Activated B cell treated with CpG ODN at 0.5 μM for 24 hours (primary cell): ENCODE measurements at regions of chr1 and their contacts with region 1.

Region 1: GRCh38 chr1:68378296-68379084 is 71.3 kb downstream of the RPE65 start:
- DNase-seq: no peak
- ATAC-seq: no peak
- H3K4me3 Mint-ChIP-seq: no peak overlapping the region
- H3K27ac Mint-ChIP-seq: no peak overlapping the region
- H3K4me1 Mint-ChIP-seq: peaks cover 4% of the 10 kb centered on the region
- H3K27me3 Mint-ChIP-seq: peaks cover 2% of the 10 kb centered on the region
- CTCF ChIP-seq: no peak

Region 2: DNA sequence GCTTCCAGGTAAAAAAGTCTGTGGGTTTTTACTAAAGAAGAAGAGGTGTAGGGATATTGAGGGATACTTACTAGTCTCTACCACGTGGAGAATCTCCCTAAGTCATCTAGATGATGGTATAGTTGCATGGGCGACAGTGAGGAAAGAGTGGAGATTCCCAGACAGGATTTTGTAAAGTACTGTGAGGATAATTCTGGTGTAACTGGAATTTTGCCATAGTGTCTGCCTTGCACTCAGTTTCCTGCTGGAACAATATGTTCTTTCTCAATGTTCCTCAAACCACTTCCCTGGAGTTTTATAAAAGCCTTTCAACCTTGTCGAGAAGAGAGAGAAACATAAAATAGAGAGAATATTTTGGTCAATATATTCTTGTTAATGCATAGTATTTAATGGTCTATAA is 51.1 kb before region 1 on chr1:
- CTCF ChIA-PET with region 1: no interaction called
- POLR2A ChIA-PET with region 1: no interaction called
- intact Hi-C with region 1: loop called (anchors 5 kb)
- DNase-seq: no peak
- ATAC-seq: no peak
- H3K4me3 Mint-ChIP-seq: no peak overlapping the region
- H3K27ac Mint-ChIP-seq: no peak overlapping the region
- H3K4me1 Mint-ChIP-seq: no peaks in the 10 kb centered on the region
- H3K27me3 Mint-ChIP-seq: no peaks in the 10 kb centered on the region
- CTCF ChIP-seq: no peak

Region 3: GRCh38 chr1:68363339-68363738 is 15.2 kb before region 1 on chr1:
- CTCF ChIA-PET with region 1: no interaction called
- POLR2A ChIA-PET with region 1: no interaction called
- intact Hi-C with region 1: no loop called
- DNase-seq: no peak
- ATAC-seq: no peak
- H3K4me3 Mint-ChIP-seq: no peak overlapping the region
- H3K27ac Mint-ChIP-seq: no peak overlapping the region
- H3K4me1 Mint-ChIP-seq: peaks cover 16% of the 10 kb centered on the region
- H3K27me3 Mint-ChIP-seq: peaks cover 5% of the 10 kb centered on the region
- CTCF ChIP-seq: no peak